OCI-LY7 (cell line): ENCODE measurements at regions of chr16 and their contacts with region 1.

Region 1: DNA sequence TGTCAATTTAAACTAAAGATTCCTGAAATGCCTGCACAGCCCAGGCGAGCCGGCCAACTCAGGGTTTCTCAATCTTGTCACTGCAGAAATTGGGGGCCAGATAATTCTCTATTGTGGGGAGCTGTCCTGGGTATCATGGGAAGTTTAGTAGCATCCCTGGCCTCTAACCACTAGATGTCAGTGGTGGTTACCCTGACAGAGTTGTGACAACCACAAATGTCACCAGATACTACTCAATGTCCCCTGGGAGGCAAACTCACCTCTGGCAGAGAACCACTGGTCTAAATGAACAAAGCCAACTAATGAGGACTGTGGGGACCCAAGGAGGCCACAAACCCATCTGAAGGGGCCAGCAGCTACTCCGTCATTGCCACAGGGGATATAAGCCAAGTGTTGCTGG is 90.9 kb downstream of the MYH11 start:
- DNase-seq: peak; percentile 94
- H3K4me3 ChIP-seq: no peak overlapping the region
- H3K27ac ChIP-seq: no peak overlapping the region
- H3K4me1 ChIP-seq: peaks cover 10% of the 10 kb centered on the region
- CTCF ChIP-seq: peak; percentile 96

Region 2: GRCh38 chr16:15822957-15823356 is 57.1 kb after region 1 on chr16:
- CTCF ChIA-PET with region 1: no interaction called
- POLR2A ChIA-PET with region 1: no interaction called
- intact Hi-C with region 1: loop called (anchors 1 kb)
- DNase-seq: no peak
- H3K4me3 ChIP-seq: no peak overlapping the region
- H3K27ac ChIP-seq: no peak overlapping the region
- H3K4me1 ChIP-seq: no peaks in the 10 kb centered on the region
- CTCF ChIP-seq: no peak

Region 3: GRCh38 chr16:15865742-15866141 is 99.9 kb after region 1 on chr16:
- CTCF ChIA-PET with region 1: no interaction called
- POLR2A ChIA-PET with region 1: no interaction called
- intact Hi-C with region 1: no loop called
- DNase-seq: no peak
- H3K4me3 ChIP-seq: no peak overlapping the region
- H3K27ac ChIP-seq: no peak overlapping the region
- H3K4me1 ChIP-seq: no peaks in the 10 kb centered on the region
- CTCF ChIP-seq: no peak

Region 4: DNA sequence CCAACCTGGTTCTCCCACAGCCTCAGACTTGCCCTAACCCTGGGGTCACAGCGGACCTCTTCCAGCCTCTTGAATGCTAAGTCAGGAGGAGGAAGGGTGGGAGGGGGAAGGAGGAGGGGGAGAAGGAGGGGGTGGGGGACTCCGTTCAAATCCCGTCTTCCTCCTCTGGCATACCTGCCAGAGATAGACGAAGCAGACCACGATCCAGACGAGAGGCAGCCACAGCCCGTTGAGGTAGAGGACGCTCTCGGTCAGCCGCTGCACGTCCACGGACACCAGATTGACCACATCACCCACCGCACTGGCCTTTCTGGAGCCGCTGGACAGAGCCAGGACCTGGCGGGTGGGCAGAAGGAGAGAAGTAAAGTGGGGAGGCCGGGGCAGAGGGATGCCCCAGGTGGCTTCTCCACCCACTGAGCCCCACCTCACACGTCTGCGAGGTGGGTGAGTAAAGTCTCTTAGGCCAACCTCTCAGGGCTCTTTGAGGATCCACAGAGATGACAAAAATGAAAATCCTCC is 432.0 kb after region 1 on chr16:
- CTCF ChIA-PET with region 1: no interaction called
- POLR2A ChIA-PET with region 1: no interaction called
- intact Hi-C with region 1: loop called (anchors 5 kb)
- DNase-seq: no peak
- H3K4me3 ChIP-seq: no peak overlapping the region
- H3K27ac ChIP-seq: no peak overlapping the region
- H3K4me1 ChIP-seq: peaks cover 27% of the 10 kb centered on the region
- CTCF ChIP-seq: no peak